ENCODE measurements at regions of chr15 and their contacts with region 1.

Region 1: GRCh38 chr15:63891079-63891767 is 57.5 kb upstream of the HERC1 start:
- DNase-seq: peak; percentile 56 to 87 (median 68)
- ATAC-seq: no peak
- H3K4me3 ChIP-seq: no peak overlapping the region
- H3K4me3 Mint-ChIP-seq: peak overlapping the region; percentile 42
- H3K27ac ChIP-seq: peak overlapping the region; percentile 60 to 68
- H3K27ac Mint-ChIP-seq: peak overlapping the region; percentile 86
- H3K4me1 ChIP-seq: peaks cover 61% of the 10 kb centered on the region
- H3K4me1 Mint-ChIP-seq: peaks cover 76% of the 10 kb centered on the region
- H3K27me3 ChIP-seq: no peaks in the 10 kb centered on the region
- H3K27me3 Mint-ChIP-seq: no peaks in the 10 kb centered on the region
- CTCF ChIP-seq: peak; percentile 84

Region 2: DNA sequence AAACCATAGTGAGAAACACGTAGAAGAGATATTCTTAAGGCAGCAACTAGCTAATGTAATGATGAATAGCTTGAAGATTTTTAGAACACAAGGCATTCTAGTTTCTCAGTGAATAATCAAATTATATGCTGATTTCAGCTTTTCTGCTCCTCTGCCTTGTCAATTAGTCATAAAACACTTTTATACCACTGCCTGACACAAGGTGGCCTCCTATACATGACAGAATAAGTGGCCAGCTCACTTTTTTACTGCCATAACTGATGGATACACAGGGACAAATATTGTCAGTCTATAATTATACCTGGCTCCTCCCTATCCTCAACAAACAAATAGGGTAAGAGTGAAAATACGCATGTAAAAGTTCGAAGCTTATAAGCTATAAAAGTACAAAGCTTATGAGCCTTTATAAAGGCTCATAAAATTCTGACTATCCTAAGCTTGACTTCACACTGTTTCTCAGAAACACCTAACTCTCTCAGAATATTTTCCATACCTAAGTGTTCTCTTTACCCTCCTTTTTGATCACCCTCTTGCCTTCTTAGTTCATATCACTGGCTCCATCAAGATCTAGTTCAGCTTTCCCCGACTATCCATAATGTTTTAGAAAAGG is 139.0 kb before region 1 on chr15:
- CTCF ChIA-PET with region 1: interaction called, 12 read pairs
- POLR2A ChIA-PET with region 1: interaction called, 4 read pairs
- intact Hi-C with region 1: loop called (anchors 1 to 2 kb)
- DNase-seq: peak in 9 of 14 experiments; percentile 15 to 74 (median 24)
- ATAC-seq: peak; percentile 73
- H3K4me3 ChIP-seq: no peak overlapping the region
- H3K4me3 Mint-ChIP-seq: no peak overlapping the region
- H3K27ac ChIP-seq: no peak overlapping the region
- H3K27ac Mint-ChIP-seq: peak overlapping the region; percentile 3
- H3K4me1 ChIP-seq: no peaks in the 10 kb centered on the region
- H3K4me1 Mint-ChIP-seq: peaks cover 6% of the 10 kb centered on the region
- H3K27me3 ChIP-seq: no peaks in the 10 kb centered on the region
- H3K27me3 Mint-ChIP-seq: no peaks in the 10 kb centered on the region
- CTCF ChIP-seq: peak; percentile 80

Region 3: DNA sequence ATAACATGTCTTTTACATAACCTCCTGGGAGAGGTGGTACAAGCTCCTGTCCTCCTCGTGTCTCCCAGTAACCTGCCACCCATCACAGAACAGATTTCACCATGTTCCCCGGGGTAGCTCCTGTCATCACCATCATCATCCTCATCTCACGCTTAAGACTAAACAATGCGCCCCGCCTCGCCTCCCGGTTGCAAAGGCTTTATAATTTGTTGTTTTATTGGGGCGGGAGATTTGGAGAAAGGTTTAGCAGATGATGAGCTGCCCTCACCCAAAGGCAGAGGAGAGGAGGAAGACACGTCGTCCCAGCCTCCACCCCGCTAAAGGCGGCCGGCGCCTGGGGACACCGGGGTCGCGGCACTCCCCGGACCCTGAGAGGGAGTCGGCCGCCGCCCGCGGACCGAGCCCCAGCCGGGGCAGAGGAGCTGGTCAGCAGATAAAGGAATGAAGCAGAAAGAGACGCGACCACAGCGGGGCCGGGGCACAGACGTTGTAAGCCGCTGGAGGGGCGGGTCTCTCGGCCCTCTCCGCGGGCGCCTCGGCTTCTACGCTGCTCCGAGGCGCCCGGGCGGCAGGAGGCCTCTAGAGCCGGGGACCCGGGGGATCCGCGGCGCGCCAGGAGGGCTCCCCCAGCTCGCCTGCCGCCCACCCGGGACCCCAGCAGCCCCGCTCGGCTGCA is 58.1 kb before region 1 on chr15:
- CTCF ChIA-PET with region 1: interaction called, 4 read pairs
- POLR2A ChIA-PET with region 1: interaction called, 18 read pairs
- intact Hi-C with region 1: loop called (anchors 1 to 2 kb)
- DNase-seq: peak; percentile 7 to 46 (median 19)
- ATAC-seq: peak; percentile 21
- H3K4me3 ChIP-seq: peak overlapping the region; percentile 92
- H3K4me3 Mint-ChIP-seq: peak overlapping the region; percentile 98
- H3K27ac ChIP-seq: peak overlapping the region; percentile 63 to 93
- H3K27ac Mint-ChIP-seq: peak overlapping the region; percentile 99
- H3K4me1 ChIP-seq: peaks cover 23% of the 10 kb centered on the region
- H3K4me1 Mint-ChIP-seq: peaks cover 67% of the 10 kb centered on the region
- H3K27me3 ChIP-seq: no peaks in the 10 kb centered on the region
- H3K27me3 Mint-ChIP-seq: no peaks in the 10 kb centered on the region
- CTCF ChIP-seq: no peak

Region 4: GRCh38 chr15:63860155-63860554 is 31.1 kb before region 1 on chr15:
- CTCF ChIA-PET with region 1: no interaction called
- POLR2A ChIA-PET with region 1: interaction called, 21 read pairs
- intact Hi-C with region 1: loop called in 1 of 2 experiments (anchors 1 kb)
- DNase-seq: peak; percentile 51 to 83 (median 69)
- ATAC-seq: peak; percentile 95
- H3K4me3 ChIP-seq: no peak overlapping the region
- H3K4me3 Mint-ChIP-seq: peak overlapping the region; percentile 59
- H3K27ac ChIP-seq: peak overlapping the region; percentile 58 to 64
- H3K27ac Mint-ChIP-seq: peak overlapping the region; percentile 98
- H3K4me1 ChIP-seq: peaks cover 32% of the 10 kb centered on the region
- H3K4me1 Mint-ChIP-seq: peaks cover 79% of the 10 kb centered on the region
- H3K27me3 ChIP-seq: no peaks in the 10 kb centered on the region
- H3K27me3 Mint-ChIP-seq: no peaks in the 10 kb centered on the region
- CTCF ChIP-seq: no peak

Region 5: DNA sequence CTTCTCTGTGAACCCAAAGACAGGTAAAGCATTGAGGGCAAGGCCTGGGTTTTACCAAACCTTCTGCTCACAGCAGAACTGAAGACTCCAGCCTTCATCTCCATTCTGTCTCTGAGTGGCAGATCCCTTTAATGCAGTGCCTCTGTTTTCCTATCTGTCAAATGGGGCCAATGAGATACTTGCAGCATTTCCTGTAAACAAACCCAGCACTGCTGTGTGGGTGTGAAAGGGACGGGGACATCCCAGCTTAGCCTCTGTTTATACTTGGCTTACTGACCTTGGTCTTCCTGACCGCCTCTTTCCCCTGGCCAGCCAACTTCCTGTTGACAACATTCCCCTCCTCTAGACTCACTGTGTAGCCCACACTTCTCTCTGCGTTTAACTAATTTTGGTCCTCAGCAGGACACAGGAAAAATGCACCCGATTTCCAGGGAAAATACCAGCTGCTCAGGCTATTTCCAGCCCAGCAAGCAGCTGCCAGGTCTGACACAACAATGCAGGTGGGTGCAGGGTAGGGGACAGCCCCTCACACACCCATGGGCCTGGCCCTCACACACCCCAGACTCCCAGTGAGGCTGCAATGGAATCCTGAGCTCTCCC is 48.4 kb after region 1 on chr15:
- CTCF ChIA-PET with region 1: no interaction called
- POLR2A ChIA-PET with region 1: no interaction called
- intact Hi-C with region 1: no loop called
- DNase-seq: peak in 5 of 14 experiments; percentile 9 to 67 (median 35)
- ATAC-seq: peak; percentile 59
- H3K4me3 ChIP-seq: no peak overlapping the region
- H3K4me3 Mint-ChIP-seq: no peak overlapping the region
- H3K27ac ChIP-seq: peak overlapping the region in 1 of 2 donors; percentile 41
- H3K27ac Mint-ChIP-seq: peak overlapping the region; percentile 79
- H3K4me1 ChIP-seq: peaks cover 29% of the 10 kb centered on the region
- H3K4me1 Mint-ChIP-seq: peaks cover 41% of the 10 kb centered on the region
- H3K27me3 ChIP-seq: no peaks in the 10 kb centered on the region
- H3K27me3 Mint-ChIP-seq: no peaks in the 10 kb centered on the region
- CTCF ChIP-seq: no peak

Region 6: DNA sequence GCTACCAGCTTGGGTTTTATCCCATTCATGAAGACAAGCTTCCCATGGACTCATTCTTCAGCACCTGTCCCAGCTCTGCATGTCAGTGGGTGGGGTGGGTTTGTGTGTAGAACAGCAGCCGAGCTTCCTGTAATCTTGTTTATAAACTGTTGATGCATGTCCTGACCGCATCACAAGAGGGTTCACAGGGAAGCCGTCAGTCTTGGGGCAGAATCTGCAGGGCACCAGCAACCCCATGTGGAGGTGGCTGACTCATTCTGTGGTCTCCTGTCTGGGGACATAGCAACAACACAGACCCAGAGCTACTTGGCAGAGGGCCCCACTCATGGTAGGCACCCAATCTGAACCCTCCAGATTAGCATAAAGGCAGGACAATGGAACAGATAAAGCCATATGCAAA is 119.5 kb after region 1 on chr15:
- CTCF ChIA-PET with region 1: interaction called, 3 read pairs
- POLR2A ChIA-PET with region 1: interaction called, 16 read pairs
- intact Hi-C with region 1: loop called (anchors 2 to 5 kb)
- DNase-seq: peak; percentile 75 to 95 (median 83)
- ATAC-seq: peak; percentile 93
- H3K4me3 ChIP-seq: no peak overlapping the region
- H3K4me3 Mint-ChIP-seq: peak overlapping the region; percentile 66
- H3K27ac ChIP-seq: peak overlapping the region; percentile 64 to 72
- H3K27ac Mint-ChIP-seq: peak overlapping the region; percentile 93
- H3K4me1 ChIP-seq: peaks cover 38% of the 10 kb centered on the region
- H3K4me1 Mint-ChIP-seq: peaks cover 41% of the 10 kb centered on the region
- H3K27me3 ChIP-seq: no peaks in the 10 kb centered on the region
- H3K27me3 Mint-ChIP-seq: no peaks in the 10 kb centered on the region
- CTCF ChIP-seq: peak; percentile 52

Region 7: DNA sequence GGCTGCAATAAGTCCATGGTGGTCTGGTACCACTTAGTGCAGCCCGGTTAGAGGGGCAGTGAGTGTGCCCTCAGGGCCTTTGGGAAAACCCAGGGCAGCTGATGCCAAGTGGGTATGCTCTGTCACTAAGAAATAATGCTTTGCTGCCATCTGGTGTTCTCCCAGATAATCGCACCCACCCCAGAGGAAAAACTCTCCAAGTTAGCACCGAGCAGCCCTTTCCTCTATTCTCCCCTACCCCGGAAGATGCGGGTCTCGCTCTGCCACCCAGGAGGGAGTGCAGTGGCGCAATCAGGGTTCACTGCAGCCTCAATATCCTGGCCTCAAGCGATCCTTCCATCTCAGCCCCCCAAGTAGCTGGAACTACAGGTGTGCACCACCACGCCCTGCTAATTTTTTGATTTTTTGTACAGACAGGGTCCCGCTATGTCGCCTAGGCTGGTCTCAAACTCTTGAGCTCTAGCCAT is 176.4 kb after region 1 on chr15:
- CTCF ChIA-PET with region 1: interaction called, 6 read pairs
- POLR2A ChIA-PET with region 1: no interaction called
- intact Hi-C with region 1: loop called in 1 of 2 experiments (anchors 5 kb)
- DNase-seq: peak; percentile 44 to 83 (median 62)
- ATAC-seq: peak; percentile 89
- H3K4me3 ChIP-seq: no peak overlapping the region
- H3K4me3 Mint-ChIP-seq: no peak overlapping the region
- H3K27ac ChIP-seq: no peak overlapping the region
- H3K27ac Mint-ChIP-seq: no peak overlapping the region
- H3K4me1 ChIP-seq: peaks cover 7% of the 10 kb centered on the region
- H3K4me1 Mint-ChIP-seq: no peaks in the 10 kb centered on the region
- H3K27me3 ChIP-seq: no peaks in the 10 kb centered on the region
- H3K27me3 Mint-ChIP-seq: no peaks in the 10 kb centered on the region
- CTCF ChIP-seq: peak; percentile 75

Region 8: DNA sequence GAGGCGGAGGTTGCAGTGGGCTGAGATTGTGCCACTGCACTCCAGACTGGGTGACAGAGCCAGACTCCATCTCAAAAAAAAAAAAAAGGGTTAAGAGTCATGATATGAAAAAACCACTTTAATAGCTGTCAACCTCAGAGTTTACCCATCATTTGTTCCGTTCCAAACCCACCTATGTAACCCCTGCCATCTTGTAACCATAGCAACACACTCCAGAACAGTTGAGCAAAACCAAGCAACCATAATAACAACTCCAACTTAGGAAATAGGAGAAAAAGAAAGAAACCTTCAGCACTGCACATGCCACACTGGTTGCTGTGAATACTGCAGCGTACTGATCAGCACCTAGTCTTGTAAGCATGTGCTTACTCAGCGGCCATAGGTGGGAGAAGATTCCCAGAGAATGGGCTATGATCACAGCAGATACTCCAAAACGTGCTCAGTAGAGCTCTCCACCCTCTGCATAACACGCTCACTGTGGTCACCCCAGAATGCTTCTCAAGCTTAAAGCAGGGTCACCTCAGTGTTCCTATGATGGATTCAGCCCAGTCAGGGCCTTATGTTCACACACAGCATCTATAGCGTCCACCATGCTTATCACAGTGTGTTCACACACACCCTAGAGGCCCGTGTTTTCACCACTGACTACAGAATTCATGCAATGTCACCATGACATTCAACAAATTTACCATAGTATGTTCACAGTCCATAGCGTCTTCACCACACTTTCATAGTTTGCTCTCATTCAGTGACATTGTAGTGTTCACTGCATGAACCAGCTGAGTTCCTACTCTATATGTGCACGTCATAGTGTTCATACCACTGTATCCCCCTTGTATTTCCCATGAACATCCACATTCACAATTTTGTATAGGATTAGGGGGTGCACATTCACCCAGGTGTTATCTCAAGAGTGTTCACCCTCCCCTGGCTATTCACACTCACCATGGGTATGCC is 1326.6 kb after region 1 on chr15:
- CTCF ChIA-PET with region 1: no interaction called
- POLR2A ChIA-PET with region 1: no interaction called
- intact Hi-C with region 1: no loop called
- DNase-seq: no peak
- ATAC-seq: no peak
- H3K4me3 ChIP-seq: no peak overlapping the region
- H3K4me3 Mint-ChIP-seq: no peak overlapping the region
- H3K27ac ChIP-seq: no peak overlapping the region
- H3K27ac Mint-ChIP-seq: no peak overlapping the region
- H3K4me1 ChIP-seq: no peaks in the 10 kb centered on the region
- H3K4me1 Mint-ChIP-seq: no peaks in the 10 kb centered on the region
- H3K27me3 ChIP-seq: no peaks in the 10 kb centered on the region
- H3K27me3 Mint-ChIP-seq: no peaks in the 10 kb centered on the region
- CTCF ChIP-seq: no peak